ENCODE measurements at regions of chr2 and their contacts with region 1.

Region 1: DNA sequence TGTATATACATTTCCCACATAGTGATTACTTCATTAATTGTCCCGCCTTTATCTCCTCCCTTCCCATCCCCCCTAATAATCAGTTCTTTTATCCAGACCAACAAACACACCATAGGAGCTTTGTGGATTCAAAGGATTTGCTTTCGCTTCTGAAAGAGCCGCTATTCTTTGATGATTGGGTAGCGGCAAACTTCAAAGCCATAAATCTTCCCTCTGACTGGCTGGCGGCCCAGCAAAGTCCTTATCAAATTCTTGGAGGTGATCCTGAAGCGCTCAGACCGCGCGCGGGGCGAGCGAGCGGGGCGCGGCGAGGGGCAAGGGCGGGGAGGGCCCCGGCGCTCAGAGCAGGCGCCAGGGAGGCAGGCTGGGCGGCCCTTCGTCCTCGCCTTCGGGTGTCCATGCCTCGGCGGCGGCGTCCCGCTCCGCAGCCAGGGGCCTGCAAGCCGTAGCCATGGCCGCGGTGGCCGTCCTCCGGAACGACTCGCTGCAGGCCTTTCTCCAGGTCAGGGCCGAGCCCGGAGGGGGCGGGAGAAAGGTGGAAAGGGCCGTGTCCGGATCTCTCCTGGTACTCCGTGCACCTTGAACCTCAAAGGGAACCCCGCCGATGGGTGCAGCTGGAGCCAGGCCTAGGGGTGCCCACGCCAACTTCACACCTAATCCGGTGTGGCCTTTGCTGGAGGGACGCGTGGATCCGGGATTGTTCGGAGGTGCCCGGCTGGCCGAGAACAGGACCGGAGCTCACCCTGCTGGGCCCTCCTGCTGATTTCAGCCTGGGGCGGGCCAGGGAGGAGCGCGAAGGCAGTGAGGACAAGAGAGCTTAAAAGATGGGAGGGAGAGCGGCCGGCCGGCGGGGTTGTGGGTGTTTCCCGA is at the start of gene SP5:
- DNase-seq: peak; percentile 66 to 78
- H3K4me3 ChIP-seq: peak within 1 kb of the TSS; percentile 77
- H3K27ac ChIP-seq: no peak within 1 kb of the TSS
- H3K4me1 ChIP-seq: no peaks in the 10 kb centered on the region
- H3K27me3 ChIP-seq: no peaks in the 10 kb centered on the region
- CTCF ChIP-seq: no peak
- total RNA-seq, gene SP5: 1.9 and 7.3 TPM in 2 replicates

Region 2: GRCh38 chr2:170369894-170370293 is 345.4 kb before region 1 on chr2:
- CTCF ChIA-PET with region 1: no interaction called
- POLR2A ChIA-PET with region 1: no interaction called
- intact Hi-C with region 1: loop called (anchors 10 kb)
- DNase-seq: no peak
- H3K4me3 ChIP-seq: no peak overlapping the region
- H3K27ac ChIP-seq: no peak overlapping the region
- H3K4me1 ChIP-seq: peaks cover 22% of the 10 kb centered on the region
- H3K27me3 ChIP-seq: no peaks in the 10 kb centered on the region
- CTCF ChIP-seq: peak; percentile 67

Region 3: DNA sequence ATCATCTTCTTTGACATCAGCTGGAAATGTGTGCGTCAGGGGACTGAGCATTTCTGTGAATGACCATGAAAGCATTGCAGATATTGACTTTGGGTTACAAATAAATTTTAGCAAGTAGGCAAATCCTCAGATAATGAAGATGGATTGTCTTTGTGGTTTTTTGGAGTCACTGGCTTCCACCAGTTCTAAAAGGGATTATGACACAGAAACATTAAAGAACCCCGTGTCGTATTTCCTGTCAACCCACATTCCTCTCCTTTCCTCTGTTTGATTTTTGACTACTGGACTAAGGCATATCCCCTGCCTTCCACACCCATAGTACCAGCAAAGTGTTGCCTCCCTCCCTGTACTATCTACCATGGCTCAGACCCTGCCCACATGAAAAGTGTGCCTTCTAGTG is 269.2 kb before region 1 on chr2:
- CTCF ChIA-PET with region 1: no interaction called
- POLR2A ChIA-PET with region 1: no interaction called
- intact Hi-C with region 1: no loop called
- DNase-seq: peak; percentile 49 to 91
- H3K4me3 ChIP-seq: no peak overlapping the region
- H3K27ac ChIP-seq: peak overlapping the region; percentile 41
- H3K4me1 ChIP-seq: peaks cover 41% of the 10 kb centered on the region
- H3K27me3 ChIP-seq: no peaks in the 10 kb centered on the region
- CTCF ChIP-seq: no peak

Region 4: DNA sequence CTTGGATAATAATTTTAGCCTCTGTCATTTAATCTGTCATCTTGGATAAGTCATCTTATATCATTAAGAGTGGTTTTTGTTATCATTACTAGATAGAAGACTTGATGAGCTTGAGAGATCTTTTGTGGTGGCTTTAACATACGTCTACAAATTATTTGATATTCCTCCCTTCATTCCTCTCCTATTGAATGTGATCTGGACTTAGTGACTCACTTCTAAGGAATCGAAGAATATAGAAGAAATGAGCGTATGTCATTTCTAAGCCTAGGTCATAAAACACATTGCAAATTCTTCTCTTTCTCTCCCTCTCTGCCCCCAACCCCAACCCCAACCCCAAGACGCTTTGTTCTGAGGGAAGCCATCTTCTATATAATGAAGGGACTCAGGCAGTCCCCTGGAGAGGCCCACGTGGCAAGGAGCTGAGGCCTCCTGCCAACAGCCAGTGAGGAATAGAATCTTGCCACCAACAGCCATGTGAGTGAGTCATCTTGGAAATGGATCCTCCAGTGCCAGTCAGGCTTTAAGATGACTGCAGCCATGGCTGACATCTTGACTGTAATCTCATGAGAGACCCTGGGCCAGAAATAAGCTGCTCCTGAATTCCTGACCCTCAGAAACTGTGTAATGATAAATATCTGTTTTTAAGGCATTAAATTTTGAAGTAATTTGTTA is 221.7 kb before region 1 on chr2:
- CTCF ChIA-PET with region 1: interaction called, 11 read pairs
- POLR2A ChIA-PET with region 1: no interaction called
- intact Hi-C with region 1: no loop called
- DNase-seq: peak in 1 of 2 experiments; percentile 9
- H3K4me3 ChIP-seq: no peak overlapping the region
- H3K27ac ChIP-seq: no peak overlapping the region
- H3K4me1 ChIP-seq: 0 out of 2 replicates have a peak, but pooled peaks cover 4% of the 10 kb centered on the region
- H3K27me3 ChIP-seq: no peaks in the 10 kb centered on the region
- CTCF ChIP-seq: no peak

Region 5: DNA sequence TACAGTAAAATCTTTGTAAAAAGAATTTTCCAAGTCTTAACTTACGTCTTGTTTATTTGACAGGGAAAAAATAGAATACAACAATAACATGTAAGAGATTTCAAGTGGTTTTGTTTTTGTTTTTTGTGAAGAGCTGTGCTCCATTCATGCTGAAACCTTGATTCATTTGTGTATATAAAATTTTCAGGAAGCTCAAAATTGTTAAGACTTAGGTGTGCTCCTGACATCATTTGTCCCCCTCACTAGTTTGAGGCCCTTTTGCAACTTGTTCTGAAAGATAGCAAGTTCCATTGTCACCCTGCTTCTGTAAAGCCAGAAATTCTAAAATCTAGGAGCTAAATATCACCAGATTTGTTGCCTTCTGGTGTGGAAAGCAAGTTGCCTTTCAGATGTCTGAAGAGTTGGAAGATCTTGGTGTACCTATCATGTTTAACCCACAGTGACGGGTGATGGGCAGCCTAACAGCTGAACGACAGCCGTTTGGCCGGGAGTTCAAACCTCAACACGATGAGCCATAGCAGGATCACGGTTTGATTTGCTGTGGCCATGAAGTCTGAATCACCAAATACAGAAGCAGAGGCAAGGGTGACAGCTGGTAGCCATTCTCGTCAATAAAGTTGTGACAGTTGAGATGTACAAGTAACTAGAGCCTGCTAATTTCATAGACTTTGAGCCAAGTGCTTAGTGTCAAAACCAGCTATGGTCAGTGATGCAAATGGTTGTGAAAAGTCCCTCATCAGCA is 205.7 kb before region 1 on chr2:
- CTCF ChIA-PET with region 1: no interaction called
- POLR2A ChIA-PET with region 1: no interaction called
- intact Hi-C with region 1: loop called (anchors 10 kb)
- DNase-seq: no peak
- H3K4me3 ChIP-seq: no peak overlapping the region
- H3K27ac ChIP-seq: no peak overlapping the region
- H3K4me1 ChIP-seq: no peaks in the 10 kb centered on the region
- H3K27me3 ChIP-seq: no peaks in the 10 kb centered on the region
- CTCF ChIP-seq: no peak

Region 6: GRCh38 chr2:170739048-170739447 is 23.8 kb after region 1 on chr2:
- CTCF ChIA-PET with region 1: interaction called, 3 read pairs
- POLR2A ChIA-PET with region 1: interaction called, 10 read pairs
- intact Hi-C with region 1: no loop called
- DNase-seq: peak; percentile 40 to 98
- H3K4me3 ChIP-seq: no peak overlapping the region
- H3K27ac ChIP-seq: peak overlapping the region; percentile 88
- H3K4me1 ChIP-seq: peaks cover 20% of the 10 kb centered on the region
- H3K27me3 ChIP-seq: no peaks in the 10 kb centered on the region
- CTCF ChIP-seq: no peak

Region 7: GRCh38 chr2:170770606-170771420 is 55.5 kb after region 1 on chr2:
- CTCF ChIA-PET with region 1: no interaction called
- POLR2A ChIA-PET with region 1: no interaction called
- intact Hi-C with region 1: loop called (anchors 2 kb)
- DNase-seq: peak; percentile 79 to 82
- H3K4me3 ChIP-seq: peak overlapping the region; percentile 74
- H3K27ac ChIP-seq: peak overlapping the region; percentile 58
- H3K4me1 ChIP-seq: no peaks in the 10 kb centered on the region
- H3K27me3 ChIP-seq: no peaks in the 10 kb centered on the region
- CTCF ChIP-seq: no peak

Region 8: GRCh38 chr2:170778900-170779299 is 63.6 kb after region 1 on chr2:
- CTCF ChIA-PET with region 1: no interaction called
- POLR2A ChIA-PET with region 1: interaction called, 11 read pairs
- intact Hi-C with region 1: no loop called
- DNase-seq: no peak
- H3K4me3 ChIP-seq: no peak overlapping the region
- H3K27ac ChIP-seq: no peak overlapping the region
- H3K4me1 ChIP-seq: no peaks in the 10 kb centered on the region
- H3K27me3 ChIP-seq: no peaks in the 10 kb centered on the region
- CTCF ChIP-seq: no peak

Region 9: DNA sequence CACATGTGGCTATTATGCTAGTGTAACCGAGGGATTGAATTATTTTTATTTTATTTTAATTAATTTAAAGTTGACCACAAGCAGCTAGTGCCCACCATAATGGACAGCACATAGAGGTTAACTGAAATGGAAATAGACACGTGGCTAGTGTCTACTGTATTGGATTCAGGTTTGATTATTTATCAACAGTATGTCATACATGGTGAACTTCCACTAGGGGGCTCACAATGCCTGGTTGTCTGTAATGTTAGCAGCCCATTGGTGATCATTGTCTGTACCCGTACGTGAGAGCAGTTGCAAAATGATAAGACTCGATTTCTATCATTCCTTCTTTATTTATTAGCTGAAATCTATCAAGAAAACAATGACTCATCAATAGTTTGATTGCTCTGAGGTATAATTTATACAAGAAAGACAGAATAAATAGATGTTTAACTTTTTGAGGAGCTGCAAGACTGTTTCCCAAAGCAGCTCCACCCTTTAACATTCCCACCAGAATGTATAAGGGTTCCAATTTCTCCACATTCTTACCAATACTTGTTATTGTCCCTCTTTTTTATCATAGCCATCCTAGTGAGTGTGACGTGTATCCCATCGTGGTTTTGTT is 883.5 kb after region 1 on chr2:
- CTCF ChIA-PET with region 1: no interaction called
- POLR2A ChIA-PET with region 1: no interaction called
- intact Hi-C with region 1: no loop called
- DNase-seq: peak; percentile 47 to 63
- H3K4me3 ChIP-seq: no peak overlapping the region
- H3K27ac ChIP-seq: no peak overlapping the region
- H3K4me1 ChIP-seq: no peaks in the 10 kb centered on the region
- H3K27me3 ChIP-seq: peaks cover 17% of the 10 kb centered on the region; the same call in 1 of the 2 replicates
- CTCF ChIP-seq: peak; percentile 100

Measured in PC-9 (cell line).